CD4-positive, alpha-beta memory T cell (primary cell): ENCODE measurements at regions of chr6 and their contacts with region 1.

Region 1: DNA sequence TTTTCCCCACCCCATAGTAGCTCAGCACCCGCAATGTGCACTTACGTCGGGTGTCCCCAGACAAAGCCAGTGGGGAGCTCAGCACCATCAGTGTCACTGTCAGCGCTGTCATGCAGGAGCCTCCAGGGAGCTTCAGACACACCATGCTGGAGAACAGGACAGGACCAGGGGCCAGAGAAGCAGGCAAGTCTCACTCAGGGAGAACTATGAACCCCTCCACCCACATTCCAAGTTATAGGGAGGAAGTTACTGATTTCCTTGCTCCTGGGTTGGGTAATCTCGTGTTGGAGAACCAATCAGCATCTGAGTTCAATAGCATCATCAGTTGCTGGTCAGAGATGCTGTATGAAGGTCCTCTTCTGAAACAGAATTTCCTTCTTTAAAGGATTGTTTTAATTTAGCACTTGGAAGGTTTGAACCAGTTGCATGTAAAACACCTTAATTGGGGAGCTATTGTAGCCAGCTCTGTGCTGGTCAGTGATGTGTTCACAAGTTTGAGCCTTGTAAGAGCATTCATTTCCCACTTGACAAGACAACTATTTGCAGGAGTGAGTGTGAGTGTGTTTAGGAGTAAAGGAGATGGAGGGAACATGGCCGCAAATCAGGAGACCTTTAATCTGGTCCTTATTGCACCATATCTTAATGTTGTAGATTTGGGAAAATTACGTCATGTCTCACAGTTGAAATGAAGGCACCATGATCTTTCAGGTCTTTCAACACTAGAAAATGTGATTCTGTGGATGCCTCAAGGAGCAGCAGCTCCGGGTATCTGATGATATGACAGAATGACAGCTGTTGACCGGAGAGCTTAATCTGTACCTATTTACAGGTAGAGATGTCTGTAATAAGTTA is at the start of gene HLA-DRB1:
- DNase-seq: peak in 3 of 5 donors; percentile 30 to 55 (median 47)
- H3K4me3 ChIP-seq: peak within 1 kb of the TSS in 1 of 2 donors; percentile 26
- H3K4me3 Mint-ChIP-seq: peak within 1 kb of the TSS in 7 of 8 donors; percentile 46 to 89 (median 72)
- H3K27ac ChIP-seq: peak within 1 kb of the TSS; percentile 43
- H3K27ac Mint-ChIP-seq: peak within 1 kb of the TSS in 5 of 7 donors; percentile 7 to 95 (median 48)
- H3K4me1 ChIP-seq: no peaks in the 10 kb centered on the region
- H3K4me1 Mint-ChIP-seq: peaks cover 0 to 31% (median 16%) of the 10 kb centered on the region in 4 donors
- H3K27me3 ChIP-seq: no peaks in the 10 kb centered on the region
- H3K27me3 Mint-ChIP-seq: peaks cover 3 to 6% of the 10 kb centered on the region in 2 donors
- total RNA-seq, gene HLA-DRB1: 14.2 to 14.3 TPM

Region 2: DNA sequence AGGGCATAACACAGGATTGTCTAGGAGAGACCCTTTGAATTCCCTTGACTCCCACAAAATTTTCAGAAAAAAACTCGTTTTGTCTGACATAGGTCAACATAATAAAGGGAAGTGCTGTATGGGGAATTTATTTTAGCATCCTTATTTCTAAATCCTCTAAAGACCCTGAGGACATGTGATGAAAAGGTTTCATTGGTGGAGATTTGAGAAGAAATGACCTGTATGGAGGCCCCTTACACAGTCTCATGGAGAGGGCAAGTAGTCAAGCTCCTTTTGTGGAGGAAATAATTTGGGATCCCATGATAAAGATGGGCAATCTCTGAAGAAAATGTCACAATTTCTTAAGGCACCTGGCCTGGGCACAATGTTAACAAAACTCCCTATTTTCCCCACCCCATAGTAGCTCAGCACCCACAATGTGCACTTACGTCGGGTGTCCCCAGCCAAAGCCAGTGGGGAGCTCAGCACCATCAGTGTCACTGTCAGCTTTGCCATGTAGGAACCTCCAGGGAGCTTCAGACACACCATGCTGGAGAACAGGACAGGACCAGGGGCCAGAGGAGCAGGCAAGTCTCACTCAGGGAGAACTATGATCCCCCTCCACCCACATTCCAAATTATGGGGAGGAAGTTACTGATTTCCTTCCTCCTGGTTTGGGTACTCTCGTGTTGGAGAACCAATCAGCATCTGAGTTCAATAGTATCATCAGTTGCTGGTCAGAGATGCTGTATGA is 60.0 kb before region 1 on chr6 and contains the start of gene HLA-DRB5:
- CTCF ChIA-PET with region 1: no interaction called
- POLR2A ChIA-PET with region 1: no interaction called
- intact Hi-C with region 1: loop called (anchors 2 kb)
- DNase-seq: peak in 2 of 5 donors; percentile 11 to 34
- H3K4me3 ChIP-seq: peak within 1 kb of the TSS in 1 of 2 donors; percentile 43
- H3K4me3 Mint-ChIP-seq: peak within 1 kb of the TSS; percentile 40 to 78 (median 54)
- H3K27ac ChIP-seq: peak within 1 kb of the TSS; percentile 21
- H3K27ac Mint-ChIP-seq: peak within 1 kb of the TSS in 5 of 7 donors; percentile 15 to 73 (median 36)
- H3K4me1 ChIP-seq: no peaks in the 10 kb centered on the region
- H3K4me1 Mint-ChIP-seq: peaks cover 0 to 10% (median under 1%) of the 10 kb centered on the region in 4 donors
- H3K27me3 ChIP-seq: no peaks in the 10 kb centered on the region
- H3K27me3 Mint-ChIP-seq: peaks cover 0 to 1% of the 10 kb centered on the region in 2 donors
- total RNA-seq, gene HLA-DRB5: 0.86 to 1.9 TPM

Region 3: GRCh38 chr6:32609731-32610640 is 20.2 kb after region 1 on chr6:
- CTCF ChIA-PET with region 1: no interaction called
- POLR2A ChIA-PET with region 1: no interaction called
- intact Hi-C with region 1: no loop called
- DNase-seq: peak; percentile 61 to 77 (median 71)
- H3K4me3 ChIP-seq: peak overlapping the region in 1 of 2 donors; percentile 12
- H3K4me3 Mint-ChIP-seq: no peak overlapping the region
- H3K27ac ChIP-seq: peak overlapping the region; percentile 67
- H3K27ac Mint-ChIP-seq: peak overlapping the region in 1 of 7 donors; percentile 50
- H3K4me1 ChIP-seq: peaks cover 15% of the 10 kb centered on the region
- H3K4me1 Mint-ChIP-seq: peaks cover 0 to 5% (median 2%) of the 10 kb centered on the region in 4 donors
- H3K27me3 ChIP-seq: no peaks in the 10 kb centered on the region
- H3K27me3 Mint-ChIP-seq: no peaks in the 10 kb centered on the region

Region 4: GRCh38 chr6:32971581-32972352 is 381.9 kb after region 1 on chr6:
- CTCF ChIA-PET with region 1: no interaction called
- POLR2A ChIA-PET with region 1: no interaction called
- intact Hi-C with region 1: no loop called
- DNase-seq: peak; percentile 100
- H3K4me3 ChIP-seq: peak overlapping the region; percentile 90 to 95
- H3K4me3 Mint-ChIP-seq: peak overlapping the region; percentile 91 to 99 (median 95)
- H3K27ac ChIP-seq: peak overlapping the region; percentile 95
- H3K27ac Mint-ChIP-seq: peak overlapping the region; percentile 99 to 100 (median 100)
- H3K4me1 ChIP-seq: peaks cover 36% of the 10 kb centered on the region
- H3K4me1 Mint-ChIP-seq: peaks cover 26 to 84% (median 33%) of the 10 kb centered on the region in 4 donors
- H3K27me3 ChIP-seq: no peaks in the 10 kb centered on the region
- H3K27me3 Mint-ChIP-seq: no peaks in the 10 kb centered on the region